Activated CD4-positive, alpha-beta T cell treated with anti-CD3 and anti-CD28 coated beads for 36 hours (primary cell): ENCODE measurements at regions of chr3 and their contacts with region 1.

Region 1: DNA sequence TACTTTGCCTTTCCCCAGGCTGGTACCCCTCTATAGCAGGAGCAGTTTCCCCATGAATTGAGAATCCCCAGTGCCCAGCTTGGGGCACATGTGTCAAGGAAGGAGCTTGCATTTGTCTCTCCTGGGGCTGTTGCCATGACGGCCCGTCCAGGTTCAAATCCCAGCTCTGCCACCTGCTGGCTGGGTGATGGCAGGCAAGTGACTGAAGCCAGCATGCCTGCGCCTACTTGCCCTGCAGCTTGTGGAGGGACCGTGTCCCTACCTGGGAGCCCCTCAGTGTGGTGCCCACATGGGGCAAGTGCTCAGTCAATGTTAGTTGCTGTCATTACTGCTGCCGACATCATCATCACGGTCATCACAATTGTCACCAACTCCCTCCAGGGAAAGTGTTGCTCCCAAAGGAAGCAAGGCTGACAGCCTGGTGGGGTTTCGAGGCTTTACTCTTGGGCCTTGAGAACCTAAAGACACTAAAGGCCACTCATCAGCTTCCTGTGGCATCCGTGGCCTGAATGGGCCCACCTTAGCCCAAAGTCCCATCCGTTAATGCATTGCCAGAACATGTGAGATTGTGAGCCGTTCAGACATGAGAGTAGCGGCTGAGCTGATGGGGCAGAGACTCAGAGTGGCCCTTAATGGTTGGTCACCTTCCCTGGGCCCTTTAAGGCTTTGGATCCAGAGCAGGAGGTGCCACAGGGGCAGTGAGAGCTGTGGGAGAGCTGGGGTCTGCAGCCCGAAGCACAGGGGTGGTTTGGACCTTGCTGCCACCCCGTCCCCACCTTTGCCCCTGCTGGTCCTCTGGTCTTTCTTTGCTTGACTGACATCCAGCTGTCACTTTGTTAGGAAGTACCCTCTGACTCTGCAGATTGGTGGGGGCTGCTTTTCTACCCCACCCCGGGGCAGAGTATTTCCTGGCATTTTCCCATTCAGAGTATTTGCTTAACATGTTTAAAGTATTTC is 144.3 kb downstream of the DNAJB8 start:
- DNase-seq: peak; percentile 76
- ATAC-seq: peak; percentile 75
- H3K4me3 Mint-ChIP-seq: no peak overlapping the region
- H3K27ac Mint-ChIP-seq: no peak overlapping the region
- H3K4me1 Mint-ChIP-seq: peaks cover 51% of the 10 kb centered on the region
- H3K27me3 Mint-ChIP-seq: no peaks in the 10 kb centered on the region

Region 2: GRCh38 chr3:128226795-128227395 is 95.4 kb before region 1 on chr3:
- CTCF ChIA-PET with region 1: interaction called, 5 read pairs
- POLR2A ChIA-PET with region 1: no interaction called
- intact Hi-C with region 1: loop called in 1 of 2 experiments (anchors 2 kb)
- DNase-seq: peak; percentile 54
- ATAC-seq: peak; percentile 36
- H3K4me3 Mint-ChIP-seq: no peak overlapping the region
- H3K27ac Mint-ChIP-seq: no peak overlapping the region
- H3K4me1 Mint-ChIP-seq: peaks cover 5% of the 10 kb centered on the region
- H3K27me3 Mint-ChIP-seq: no peaks in the 10 kb centered on the region

Region 3: GRCh38 chr3:128334166-128334565 is 11.8 kb after region 1 on chr3:
- CTCF ChIA-PET with region 1: interaction called, 13 read pairs
- POLR2A ChIA-PET with region 1: no interaction called
- intact Hi-C with region 1: no loop called
- DNase-seq: no peak
- ATAC-seq: no peak
- H3K4me3 Mint-ChIP-seq: no peak overlapping the region
- H3K27ac Mint-ChIP-seq: no peak overlapping the region
- H3K4me1 Mint-ChIP-seq: no peaks in the 10 kb centered on the region
- H3K27me3 Mint-ChIP-seq: no peaks in the 10 kb centered on the region

Region 4: DNA sequence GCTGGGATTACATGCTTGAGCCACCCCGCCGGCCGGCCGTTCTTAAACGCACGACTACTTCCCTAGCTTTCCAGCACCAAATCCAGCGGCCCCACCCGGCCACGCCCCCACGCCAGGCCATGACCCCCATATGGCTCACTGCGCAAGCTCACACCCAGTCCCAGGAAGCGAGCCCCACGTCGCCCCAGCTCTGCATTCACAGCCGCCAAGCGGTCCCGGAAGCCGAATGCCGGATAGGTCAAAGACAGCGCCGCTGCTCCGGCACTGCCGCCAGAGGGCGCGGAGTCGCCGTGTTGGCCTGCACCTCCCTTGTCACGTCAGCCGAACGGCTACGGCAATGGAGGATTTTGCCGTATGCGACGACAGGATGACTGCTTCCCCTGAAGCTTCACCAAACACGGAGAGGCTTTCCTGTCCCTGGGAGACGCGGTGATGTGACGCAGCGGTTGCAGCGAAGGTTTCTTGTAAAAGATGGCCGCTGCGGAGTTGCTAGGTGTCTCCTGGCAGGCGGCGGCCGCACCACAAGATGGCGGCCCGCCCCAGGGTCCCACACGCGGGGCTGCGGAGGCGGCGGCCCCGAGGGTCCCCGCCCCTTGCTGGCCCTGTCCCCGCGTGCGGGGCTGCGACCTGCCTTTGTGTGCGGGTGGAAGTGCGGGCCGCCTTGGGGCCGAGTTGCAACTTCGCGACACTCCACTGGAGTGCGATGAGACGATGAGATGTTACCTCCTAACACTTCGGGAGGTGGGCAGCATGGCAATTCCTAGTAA is 358.4 kb after region 1 on chr3:
- CTCF ChIA-PET with region 1: no interaction called
- POLR2A ChIA-PET with region 1: no interaction called
- intact Hi-C with region 1: no loop called
- DNase-seq: peak; percentile 98
- ATAC-seq: peak; percentile 98
- H3K4me3 Mint-ChIP-seq: peak overlapping the region; percentile 96
- H3K27ac Mint-ChIP-seq: peak overlapping the region; percentile 99
- H3K4me1 Mint-ChIP-seq: peaks cover 31% of the 10 kb centered on the region
- H3K27me3 Mint-ChIP-seq: no peaks in the 10 kb centered on the region